Dendritic cell treated with granulocyte-macrophage colony-stimulating factor and Interleukin-4, amounts not matched to agents 40 ng/mL and 50 ng/mL, for 4 days (primary cell): ENCODE measurements at regions of chr5 and their contacts with region 1.

Region 1: DNA sequence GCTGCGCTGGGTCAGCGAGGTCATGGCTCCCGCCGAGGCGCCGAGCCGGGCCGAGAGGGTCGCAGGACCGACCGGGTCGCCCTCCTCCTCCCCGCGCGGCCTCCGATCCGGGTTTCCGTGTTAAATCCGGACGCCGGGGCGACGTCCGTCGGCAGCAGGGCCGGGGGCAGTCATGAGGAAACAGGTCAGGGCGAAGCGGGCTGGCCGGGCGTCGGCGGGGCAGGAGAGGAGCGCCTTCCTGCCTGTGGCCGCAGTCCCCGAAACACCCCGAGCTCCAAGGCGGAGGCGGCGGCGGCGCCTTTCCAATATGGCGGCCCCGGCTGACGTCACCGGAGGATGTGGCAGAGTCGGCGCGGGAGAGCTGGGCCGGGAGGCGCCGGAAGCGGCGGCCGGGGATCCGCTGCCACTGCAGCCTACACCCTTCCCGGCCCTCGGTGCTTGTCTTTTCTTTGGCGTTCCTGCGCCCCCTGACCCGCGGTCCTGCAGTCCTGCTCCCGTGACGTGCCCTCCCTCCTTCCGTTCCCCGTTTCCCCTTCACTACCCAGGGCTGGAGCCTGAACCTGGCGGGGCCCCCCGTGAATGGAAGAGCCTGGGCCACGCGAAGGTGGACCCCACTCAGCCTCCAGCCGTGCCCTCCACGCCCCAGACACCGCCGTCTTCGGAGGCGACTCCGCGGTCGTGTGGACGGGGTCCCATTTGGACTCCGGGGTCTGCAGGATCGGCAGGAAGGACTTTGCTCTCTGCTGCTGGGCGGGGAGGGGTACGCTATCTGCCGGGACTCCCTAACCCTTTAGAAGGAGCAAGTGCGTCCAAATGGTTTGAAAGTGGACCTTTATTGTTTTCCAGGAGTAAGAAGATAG is at the start of gene GOLPH3:
- H3K4me3 Mint-ChIP-seq: peak within 1 kb of the TSS; percentile 100
- H3K27ac Mint-ChIP-seq: peak within 1 kb of the TSS; percentile 100
- H3K4me1 Mint-ChIP-seq: peaks cover 39% of the 10 kb centered on the region
- H3K27me3 Mint-ChIP-seq: no peaks in the 10 kb centered on the region

Region 2: DNA sequence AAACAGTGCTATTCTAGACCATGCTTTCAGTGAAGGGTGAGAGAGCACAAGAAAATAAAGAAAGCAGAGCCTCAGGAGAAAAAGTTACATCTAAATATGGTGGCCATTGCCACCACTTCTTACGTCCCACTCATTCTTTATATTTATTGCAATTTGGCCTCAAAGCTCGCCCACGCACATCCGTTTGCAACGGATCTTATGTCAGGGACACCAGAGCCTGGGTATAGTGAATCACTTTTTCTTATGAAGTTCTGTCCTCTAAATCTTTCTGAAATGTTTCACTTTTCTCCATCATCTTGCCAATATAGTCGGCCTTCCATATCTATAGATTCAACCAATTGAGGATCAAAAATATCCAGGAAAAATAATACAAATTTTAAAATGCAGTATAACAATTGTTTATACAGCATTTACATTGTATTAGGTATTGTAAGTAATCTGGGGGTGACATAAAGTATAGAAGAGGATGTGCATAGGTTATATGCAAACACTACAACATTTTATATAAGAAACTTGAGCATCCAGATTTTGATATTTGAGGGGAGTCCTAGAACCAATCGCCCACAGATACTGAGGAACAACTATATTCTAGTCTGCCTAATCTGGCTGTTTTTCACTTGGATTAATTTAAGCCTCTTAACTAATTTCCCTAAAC is 35.3 kb before region 1 on chr5:
- intact Hi-C with region 1: no loop called
- H3K4me3 Mint-ChIP-seq: no peak overlapping the region
- H3K27ac Mint-ChIP-seq: peak overlapping the region; percentile 21
- H3K4me1 Mint-ChIP-seq: no peaks in the 10 kb centered on the region
- H3K27me3 Mint-ChIP-seq: no peaks in the 10 kb centered on the region

Region 3: GRCh38 chr5:32190095-32190494 is 15.9 kb after region 1 on chr5:
- intact Hi-C with region 1: no loop called
- H3K4me3 Mint-ChIP-seq: no peak overlapping the region
- H3K27ac Mint-ChIP-seq: no peak overlapping the region
- H3K4me1 Mint-ChIP-seq: peaks cover 10% of the 10 kb centered on the region
- H3K27me3 Mint-ChIP-seq: no peaks in the 10 kb centered on the region

Region 4: DNA sequence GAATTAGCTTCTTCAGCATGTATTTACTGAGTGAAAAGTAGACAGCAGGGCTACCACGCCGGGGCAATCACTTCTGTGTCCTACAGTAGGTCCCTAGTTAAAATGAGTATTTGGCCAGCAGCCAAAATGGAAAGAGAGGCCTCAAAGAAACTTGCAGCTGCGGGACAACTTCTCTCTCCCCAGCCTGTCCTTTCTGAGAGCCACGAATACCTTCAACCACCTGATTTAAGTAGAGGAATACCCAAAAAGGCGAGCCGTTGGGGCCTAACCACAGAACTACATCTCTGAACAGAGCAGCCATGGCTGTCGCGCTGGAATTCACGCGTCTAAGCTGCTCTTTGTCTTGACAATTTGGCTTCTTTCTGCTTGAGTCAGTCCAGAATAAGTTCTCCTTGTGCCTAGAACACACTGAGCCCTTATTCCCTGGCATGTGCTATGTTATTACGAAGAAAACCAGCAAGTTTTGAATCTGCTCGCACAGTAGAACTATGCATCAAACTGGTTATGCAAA is 43.7 kb after region 1 on chr5:
- intact Hi-C with region 1: loop called (anchors 2 kb)
- H3K4me3 Mint-ChIP-seq: no peak overlapping the region
- H3K27ac Mint-ChIP-seq: no peak overlapping the region
- H3K4me1 Mint-ChIP-seq: peaks cover 18% of the 10 kb centered on the region
- H3K27me3 Mint-ChIP-seq: no peaks in the 10 kb centered on the region

Region 5: DNA sequence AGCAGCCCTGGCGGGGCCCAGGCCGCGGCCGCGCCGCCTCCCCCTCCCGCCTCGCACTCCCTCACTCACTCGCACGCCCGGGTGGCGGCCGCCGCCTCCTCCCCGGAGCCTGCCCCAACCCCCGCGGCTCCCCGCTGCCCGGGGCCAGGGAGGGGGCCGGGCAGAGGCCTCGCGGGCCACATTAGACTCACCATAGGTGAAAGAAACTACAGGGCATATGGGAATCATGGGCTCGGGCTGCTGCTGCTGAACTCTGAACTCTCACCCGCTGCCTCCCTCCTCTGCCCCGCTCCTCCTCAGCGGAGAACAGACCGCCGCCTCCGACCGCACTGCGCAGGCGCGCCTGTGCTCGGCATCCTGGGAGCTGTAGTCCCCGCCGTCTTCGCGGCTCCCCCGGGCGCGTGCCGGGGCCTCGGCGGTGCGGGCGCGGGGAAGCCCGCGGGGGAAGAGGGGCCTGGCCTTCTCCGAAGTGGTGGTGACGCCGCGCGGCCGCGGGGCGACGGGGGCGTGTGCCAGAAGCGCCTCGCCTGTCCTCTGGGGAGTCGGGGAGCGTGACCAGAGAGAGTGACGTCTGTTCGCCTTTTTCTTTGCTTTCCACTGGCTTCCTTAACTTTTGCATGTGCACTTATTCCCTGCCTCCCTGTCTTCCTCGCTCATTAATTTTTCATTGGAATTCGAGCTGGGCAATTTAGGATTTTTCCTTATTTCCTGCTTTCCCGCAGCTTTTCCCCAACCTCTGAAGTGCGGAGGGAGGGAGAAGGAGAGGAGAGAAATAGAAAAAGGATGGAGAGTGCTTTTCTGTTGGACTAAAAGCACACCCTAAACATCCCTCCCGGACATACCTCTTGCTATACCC is 270.4 kb after region 1 on chr5 and contains the start of gene ZFR:
- intact Hi-C with region 1: loop called (anchors 10 kb)
- H3K4me3 Mint-ChIP-seq: peak within 1 kb of the TSS; percentile 87
- H3K27ac Mint-ChIP-seq: peak within 1 kb of the TSS; percentile 83
- H3K4me1 Mint-ChIP-seq: peaks cover 36% of the 10 kb centered on the region
- H3K27me3 Mint-ChIP-seq: no peaks in the 10 kb centered on the region